MCF 10A (cell line): ENCODE measurements at regions of chrX and their contacts with region 1.

Region 1: DNA sequence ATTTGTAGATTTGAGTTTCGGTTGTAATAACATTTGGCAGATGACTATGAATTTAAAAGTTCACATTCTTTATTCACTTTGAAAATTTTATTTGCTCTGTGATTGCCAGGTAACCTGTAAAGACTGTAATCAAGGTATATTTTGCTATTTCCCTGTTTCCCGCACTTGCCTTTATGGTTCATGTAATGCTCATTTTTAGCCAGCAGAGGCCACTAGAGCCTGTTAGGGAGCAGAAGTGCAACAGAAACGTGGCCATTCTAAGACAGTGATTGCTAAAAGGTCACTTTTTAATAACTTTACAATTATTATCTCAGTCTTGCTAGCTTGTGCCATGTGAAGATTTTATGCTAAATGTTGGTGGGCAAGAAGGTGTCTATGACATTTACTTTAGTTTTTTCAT is 12.4 kb downstream of the YIPF6 start:
- DNase-seq: peak; percentile 68
- H3K4me3 Mint-ChIP-seq: no peak overlapping the region
- H3K27ac Mint-ChIP-seq: no peak overlapping the region
- H3K4me1 Mint-ChIP-seq: no peaks in the 10 kb centered on the region
- H3K27me3 Mint-ChIP-seq: peaks cover 17% of the 10 kb centered on the region
- CTCF ChIP-seq: peak; percentile 81

Region 2: GRCh38 chrX:67953658-67954057 is 557.6 kb before region 1 on chrX:
- CTCF ChIA-PET with region 1: no interaction called
- POLR2A ChIA-PET with region 1: no interaction called
- intact Hi-C with region 1: no loop called
- DNase-seq: no peak
- H3K4me3 Mint-ChIP-seq: no peak overlapping the region
- H3K27ac Mint-ChIP-seq: no peak overlapping the region
- H3K4me1 Mint-ChIP-seq: no peaks in the 10 kb centered on the region
- H3K27me3 Mint-ChIP-seq: no peaks in the 10 kb centered on the region
- CTCF ChIP-seq: no peak

Region 3: GRCh38 chrX:68532831-68533533 is 21.7 kb after region 1 on chrX:
- CTCF ChIA-PET with region 1: interaction called, 10 read pairs
- POLR2A ChIA-PET with region 1: no interaction called
- intact Hi-C with region 1: no loop called
- DNase-seq: no peak
- H3K4me3 Mint-ChIP-seq: no peak overlapping the region
- H3K27ac Mint-ChIP-seq: no peak overlapping the region
- H3K4me1 Mint-ChIP-seq: no peaks in the 10 kb centered on the region
- H3K27me3 Mint-ChIP-seq: peaks cover 17% of the 10 kb centered on the region
- CTCF ChIP-seq: no peak

Region 4: DNA sequence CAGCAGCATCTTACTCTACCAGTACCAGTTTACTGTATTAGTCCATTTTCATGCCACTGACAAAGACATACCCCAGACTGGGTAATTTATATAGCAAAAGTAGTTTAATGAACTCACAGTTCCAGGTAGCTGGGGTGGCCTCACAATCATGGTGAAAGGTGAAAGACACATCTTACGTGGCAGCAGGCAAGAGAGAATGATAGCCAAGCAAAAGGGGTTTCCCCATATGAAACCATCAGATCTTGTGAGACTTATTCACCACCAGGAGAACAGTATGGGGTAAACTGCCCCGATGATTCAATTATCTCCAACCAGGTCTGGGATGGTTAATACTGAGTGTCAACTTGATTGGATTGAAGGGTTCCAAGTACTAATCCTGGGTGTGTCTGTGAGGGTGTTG is 56.9 kb after region 1 on chrX:
- CTCF ChIA-PET with region 1: no interaction called
- POLR2A ChIA-PET with region 1: no interaction called
- intact Hi-C with region 1: no loop called
- DNase-seq: no peak
- H3K4me3 Mint-ChIP-seq: no peak overlapping the region
- H3K27ac Mint-ChIP-seq: no peak overlapping the region
- H3K4me1 Mint-ChIP-seq: peaks cover 17% of the 10 kb centered on the region
- H3K27me3 Mint-ChIP-seq: peaks cover 10% of the 10 kb centered on the region
- CTCF ChIP-seq: no peak

Region 5: GRCh38 chrX:68650491-68650890 is 139.2 kb after region 1 on chrX:
- CTCF ChIA-PET with region 1: no interaction called
- POLR2A ChIA-PET with region 1: no interaction called
- intact Hi-C with region 1: loop called (anchors 1 kb)
- DNase-seq: peak; percentile 24
- H3K4me3 Mint-ChIP-seq: no peak overlapping the region
- H3K27ac Mint-ChIP-seq: no peak overlapping the region
- H3K4me1 Mint-ChIP-seq: peaks cover 6% of the 10 kb centered on the region
- H3K27me3 Mint-ChIP-seq: peaks cover 23% of the 10 kb centered on the region
- CTCF ChIP-seq: no peak

Region 6: DNA sequence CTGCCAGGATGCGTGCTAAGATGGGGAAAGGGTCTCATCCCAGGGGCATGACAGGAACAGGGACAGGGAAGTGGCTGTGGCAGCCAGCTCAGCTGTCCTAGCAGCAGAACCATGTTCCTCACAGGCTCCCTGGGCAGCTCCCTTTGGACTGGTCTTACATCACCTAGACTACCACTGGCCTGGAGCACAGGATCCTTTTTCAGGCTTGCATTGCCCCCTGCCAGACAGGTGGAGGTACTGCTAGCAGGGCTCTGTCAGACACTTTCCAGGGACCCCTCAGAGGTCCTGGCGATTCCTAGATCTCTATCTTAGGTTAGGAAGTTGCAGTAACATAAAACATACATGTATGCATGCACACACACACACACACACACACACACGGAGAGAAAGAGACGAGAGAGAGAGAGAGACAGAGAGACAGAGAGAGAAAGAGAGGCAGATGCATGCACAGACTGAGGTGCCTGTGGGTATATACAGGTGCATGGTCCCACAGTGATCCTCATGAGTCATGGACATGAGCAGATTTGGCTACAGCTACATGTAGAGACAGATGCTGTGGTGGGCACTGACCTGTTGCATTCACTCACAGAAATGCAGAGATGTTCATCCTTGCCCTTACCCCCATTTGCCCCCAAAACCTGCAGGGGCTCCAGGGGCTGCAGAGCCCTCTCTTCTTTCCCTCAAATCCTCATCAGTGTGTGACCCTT is 199.8 kb after region 1 on chrX:
- CTCF ChIA-PET with region 1: interaction called, 45 read pairs
- POLR2A ChIA-PET with region 1: no interaction called
- intact Hi-C with region 1: loop called (anchors 1 kb)
- DNase-seq: peak; percentile 59
- H3K4me3 Mint-ChIP-seq: no peak overlapping the region
- H3K27ac Mint-ChIP-seq: no peak overlapping the region
- H3K4me1 Mint-ChIP-seq: no peaks in the 10 kb centered on the region
- H3K27me3 Mint-ChIP-seq: peaks cover 55% of the 10 kb centered on the region
- CTCF ChIP-seq: peak; percentile 72